Common myeloid progenitor, CD34-positive (primary cell): ENCODE measurements at regions of chr7 and their contacts with region 1.

Region 1: DNA sequence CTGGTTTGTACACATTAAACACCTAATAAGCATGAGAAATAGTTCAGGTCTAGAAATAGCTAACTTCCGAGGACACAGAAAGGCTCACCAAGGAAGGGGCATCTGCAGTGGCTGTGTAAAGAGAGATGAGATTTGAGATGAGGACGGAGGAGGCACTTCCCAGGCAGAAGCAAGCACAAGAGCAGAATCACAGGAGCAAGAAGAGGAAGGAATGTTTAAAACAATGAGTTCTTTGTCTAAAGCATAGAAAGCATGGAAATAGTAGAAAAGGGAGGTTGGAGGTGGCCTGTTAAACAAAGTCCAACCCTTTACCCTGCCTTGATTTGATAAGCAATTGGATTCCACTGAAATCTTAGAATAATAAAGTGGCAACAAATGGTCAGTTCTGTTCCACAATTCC is 11.6 kb upstream of the PON3 start:
- DNase-seq: no peak
- H3K4me3 ChIP-seq: no peak overlapping the region
- H3K27ac ChIP-seq: no peak overlapping the region
- H3K4me1 ChIP-seq: peaks cover 0 to 3% (median 0%) of the 10 kb centered on the region in 4 experiments
- H3K27me3 ChIP-seq: no peaks in the 10 kb centered on the region

Region 2: DNA sequence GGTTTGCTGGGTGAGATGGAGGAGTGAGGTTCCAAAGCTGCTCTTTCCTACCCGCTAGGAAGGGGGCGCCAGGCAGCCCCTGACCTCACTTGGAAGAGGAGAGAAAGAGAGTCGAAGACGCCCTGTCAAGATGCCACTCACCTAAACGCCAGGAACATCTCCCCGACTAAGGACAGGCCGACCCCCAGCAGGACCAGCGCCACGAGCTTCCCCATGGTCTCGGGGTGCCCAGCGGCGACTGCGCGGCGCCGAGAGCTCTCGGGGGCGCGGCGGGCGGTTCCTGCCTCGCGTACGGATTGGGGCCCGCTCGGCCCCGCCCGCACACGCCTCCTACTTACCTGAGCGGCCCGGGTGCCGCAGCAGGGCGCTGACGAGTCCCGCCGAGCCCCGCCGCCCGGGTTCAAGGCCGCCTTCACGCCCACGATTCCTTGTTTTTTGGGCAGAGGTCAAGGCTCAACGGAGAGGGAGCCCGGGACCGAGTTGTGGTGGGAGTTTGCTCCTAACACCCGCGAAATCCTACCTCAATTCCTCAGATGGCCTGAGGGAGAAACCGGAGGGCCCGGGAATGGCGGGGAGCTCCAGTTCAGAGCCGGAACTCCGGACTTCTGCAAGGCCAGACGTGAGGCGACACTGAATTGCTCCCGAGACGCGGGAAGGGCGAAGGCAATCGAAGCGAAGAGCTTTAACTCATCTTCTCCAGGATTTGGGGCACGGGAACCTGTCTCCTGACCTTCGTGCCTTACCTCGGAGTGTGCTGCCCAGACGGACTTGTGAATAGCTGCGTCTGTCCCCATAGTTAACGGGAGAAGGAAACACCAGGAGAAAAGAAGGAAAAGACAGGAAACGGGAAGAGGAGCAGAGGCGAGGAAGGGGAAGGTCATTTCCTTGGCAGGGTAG is 11.4 kb before region 1 on chr7 and contains the start of gene PON3:
- CTCF ChIA-PET with region 1: interaction called, 24 read pairs
- POLR2A ChIA-PET with region 1: no interaction called
- DNase-seq: peak; percentile 48 to 73 (median 67)
- H3K4me3 ChIP-seq: peak within 1 kb of the TSS; percentile 35 to 80 (median 64)
- H3K27ac ChIP-seq: no peak within 1 kb of the TSS
- H3K4me1 ChIP-seq: peaks cover 0 to 14% (median 8%) of the 10 kb centered on the region in 4 experiments
- H3K27me3 ChIP-seq: peaks cover 0 to 18% (median 8%) of the 10 kb centered on the region in 5 experiments